ENCODE measurements at regions of chr18 and their contacts with region 1.

Region 1: GRCh38 chr18:54119524-54120019 is 104.9 kb downstream of the MBD2 start:
- DNase-seq: no peak
- H3K4me3 ChIP-seq: no peak overlapping the region
- CTCF ChIP-seq: peak; percentile 65

Region 2: GRCh38 chr18:53567929-53568574 is 551.5 kb before region 1 on chr18:
- CTCF ChIA-PET with region 1: interaction called, 16 read pairs
- POLR2A ChIA-PET with region 1: no interaction called
- DNase-seq: no peak
- H3K4me3 ChIP-seq: no peak overlapping the region
- CTCF ChIP-seq: peak; percentile 35

Region 3: GRCh38 chr18:53698907-53699306 is 420.7 kb before region 1 on chr18:
- CTCF ChIA-PET with region 1: interaction called, 94 read pairs
- POLR2A ChIA-PET with region 1: no interaction called
- DNase-seq: peak; percentile 5
- H3K4me3 ChIP-seq: no peak overlapping the region
- CTCF ChIP-seq: peak; percentile 65

Region 4: DNA sequence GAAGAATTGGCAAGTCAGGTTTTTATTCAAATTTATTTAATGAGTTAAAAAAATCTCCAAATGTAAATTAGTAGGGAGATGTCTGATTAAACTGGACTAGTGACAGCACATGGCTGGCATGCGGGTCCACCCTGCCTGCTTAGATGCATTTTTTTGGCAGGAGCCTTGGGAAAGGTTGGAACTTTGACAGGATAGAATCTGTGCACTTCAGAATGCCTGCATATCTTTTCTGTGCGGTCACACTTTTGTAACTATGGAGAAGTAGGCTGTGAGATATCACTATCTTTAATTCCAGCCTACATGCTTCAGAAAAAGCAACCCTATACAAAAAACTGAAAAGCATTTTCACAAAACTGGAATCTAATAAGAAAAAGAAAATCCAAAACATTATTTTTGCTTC is 212.9 kb before region 1 on chr18:
- CTCF ChIA-PET with region 1: interaction called, 12 read pairs
- POLR2A ChIA-PET with region 1: no interaction called
- DNase-seq: no peak
- H3K4me3 ChIP-seq: no peak overlapping the region
- CTCF ChIP-seq: no peak

Region 5: GRCh38 chr18:54109131-54109683 is 10.4 kb before region 1 on chr18:
- CTCF ChIA-PET with region 1: interaction called, 117 read pairs
- POLR2A ChIA-PET with region 1: no interaction called
- DNase-seq: no peak
- H3K4me3 ChIP-seq: no peak overlapping the region
- CTCF ChIP-seq: no peak

Region 6: GRCh38 chr18:54269893-54270844 is 150.6 kb after region 1 on chr18:
- CTCF ChIA-PET with region 1: interaction called, 10 read pairs
- POLR2A ChIA-PET with region 1: no interaction called
- DNase-seq: no peak
- H3K4me3 ChIP-seq: peak overlapping the region; percentile 71
- CTCF ChIP-seq: peak; percentile 9

Measured in AG04449 (cell line).